Posterior cingulate gyrus (tissue), 11 donors: ENCODE measurements at regions of chr11 and their contacts with region 1.

Region 1: DNA sequence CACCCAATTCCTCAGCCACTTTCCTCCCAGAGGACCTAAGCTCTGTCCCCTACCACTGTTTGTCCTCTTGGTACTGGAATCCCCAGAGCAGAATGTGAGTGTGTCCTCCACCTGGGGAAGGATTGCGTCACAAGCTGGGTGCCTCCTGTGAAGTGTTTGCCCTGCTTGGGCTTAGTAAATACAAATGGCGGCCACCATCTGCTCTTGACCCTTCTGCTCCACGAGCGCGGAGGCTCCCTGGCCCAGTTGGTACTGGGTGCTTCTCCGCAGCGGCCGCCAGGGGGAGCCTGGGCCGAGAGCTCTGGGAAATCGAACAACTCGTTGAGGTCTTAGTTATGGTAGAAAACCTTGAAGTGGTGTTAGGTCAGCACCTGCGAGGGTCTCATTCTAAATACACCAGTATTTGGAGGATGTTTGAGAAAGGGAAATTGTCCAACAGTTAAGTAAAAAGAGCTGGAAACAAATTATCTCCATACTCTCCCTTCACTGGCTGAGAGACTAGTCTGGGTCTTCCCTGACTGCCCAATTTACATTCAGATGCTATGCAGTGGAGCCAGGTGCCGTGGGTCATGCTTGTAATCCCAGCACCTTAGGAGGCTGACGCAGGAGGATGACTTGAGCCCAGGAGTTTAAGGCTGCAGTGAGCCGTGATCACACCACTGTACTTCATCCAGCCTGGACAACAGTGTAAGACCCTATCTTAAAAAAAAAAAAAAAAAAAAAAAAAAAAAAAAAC is 74.6 kb upstream of the TEAD1 start:
- DNase-seq: peak in 9 of 10 donors; percentile 25 to 92 (median 54)

Region 2: GRCh38 chr11:12655842-12656241 is 56.3 kb after region 1 on chr11:
- intact Hi-C with region 1: loop called (anchors 5 kb)
- DNase-seq: no peak